Astrocyte of the spinal cord (primary cell): ENCODE measurements at regions of chr14 and their contacts with region 1.

Region 1: GRCh38 chr14:99879401-99880295 is 86.4 kb downstream of the EML1 start:
- DNase-seq: peak; percentile 86
- H3K4me3 ChIP-seq: no peak overlapping the region
- CTCF ChIP-seq: no peak

Region 2: DNA sequence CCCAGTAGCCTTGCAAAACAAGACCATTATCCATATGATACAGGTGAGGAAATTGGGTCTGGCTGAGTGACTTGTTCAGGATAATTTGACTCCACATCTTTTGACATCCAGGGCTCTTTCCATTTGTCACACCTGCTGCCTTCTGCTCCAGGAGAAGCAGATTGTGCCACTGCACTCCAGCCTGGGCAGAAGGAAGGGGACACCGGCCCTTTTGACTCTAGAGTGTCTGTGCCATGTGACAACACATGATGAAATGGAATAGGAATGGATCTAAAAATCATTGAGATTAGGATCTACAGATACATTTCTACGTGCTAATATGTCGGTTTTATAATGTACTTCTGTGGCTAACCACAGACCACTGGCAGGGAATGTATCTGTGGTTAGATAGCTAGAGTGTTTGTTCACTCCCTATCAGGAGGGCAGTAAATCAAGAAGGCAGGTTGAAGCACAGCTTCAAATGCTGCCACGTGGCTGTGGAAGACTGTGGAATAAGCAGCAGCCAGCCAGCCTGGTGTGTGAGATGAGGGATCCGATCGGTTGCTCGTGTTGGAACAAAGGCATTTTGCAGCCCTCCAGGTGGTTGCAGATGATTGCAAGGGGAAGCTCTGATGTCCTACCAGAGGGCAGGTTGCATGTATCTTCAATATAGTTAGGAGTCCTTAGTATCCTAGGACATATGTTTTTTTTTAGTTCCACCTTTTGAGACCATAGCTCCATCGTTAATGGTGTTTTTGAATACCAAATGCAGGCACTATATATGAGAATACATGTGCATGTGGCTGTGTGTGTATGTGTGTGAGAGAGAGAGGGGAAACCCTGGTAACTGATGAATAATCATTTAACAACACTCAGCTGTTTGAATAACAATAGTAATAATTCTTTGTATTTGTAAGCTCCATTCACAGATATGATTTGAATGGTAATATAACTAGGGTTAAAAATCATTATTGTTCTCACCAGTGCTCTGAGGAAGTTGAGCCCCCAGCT is 57.8 kb before region 1 on chr14:
- in situ Hi-C with region 1: loop called (anchors 10 kb)
- DNase-seq: peak; percentile 84
- H3K4me3 ChIP-seq: no peak overlapping the region
- CTCF ChIP-seq: no peak